ENCODE measurements at regions of chr2 and their contacts with region 1.

Region 1: DNA sequence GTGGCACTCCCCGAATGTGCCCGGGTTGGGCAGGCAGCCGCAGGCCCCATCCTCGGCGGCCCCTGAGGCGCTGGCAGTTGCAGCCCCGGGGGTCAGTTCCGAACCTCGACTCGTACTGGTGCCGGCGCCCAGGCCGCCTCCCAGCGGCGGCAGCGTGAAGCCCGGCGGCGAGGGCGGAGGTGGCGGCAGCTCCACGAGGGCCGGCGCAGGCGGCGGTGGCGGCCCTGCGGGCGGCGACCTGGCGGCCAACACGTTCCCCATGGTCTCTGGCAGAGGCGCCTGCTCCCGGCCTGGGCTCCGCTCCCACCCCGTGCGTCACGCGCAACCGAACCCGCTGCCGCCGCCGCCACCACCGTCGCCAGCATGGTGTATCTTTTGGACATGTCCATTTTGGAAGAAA is 196.3 kb downstream of the CCDC74A start:
- DNase-seq: no peak
- H3K4me3 ChIP-seq: no peak overlapping the region
- H3K27ac ChIP-seq: no peak overlapping the region
- H3K4me1 ChIP-seq: no peaks in the 10 kb centered on the region
- H3K27me3 ChIP-seq: no peaks in the 10 kb centered on the region
- CTCF ChIP-seq: no peak
- POLR2A ChIP-seq: no peak

Region 2: DNA sequence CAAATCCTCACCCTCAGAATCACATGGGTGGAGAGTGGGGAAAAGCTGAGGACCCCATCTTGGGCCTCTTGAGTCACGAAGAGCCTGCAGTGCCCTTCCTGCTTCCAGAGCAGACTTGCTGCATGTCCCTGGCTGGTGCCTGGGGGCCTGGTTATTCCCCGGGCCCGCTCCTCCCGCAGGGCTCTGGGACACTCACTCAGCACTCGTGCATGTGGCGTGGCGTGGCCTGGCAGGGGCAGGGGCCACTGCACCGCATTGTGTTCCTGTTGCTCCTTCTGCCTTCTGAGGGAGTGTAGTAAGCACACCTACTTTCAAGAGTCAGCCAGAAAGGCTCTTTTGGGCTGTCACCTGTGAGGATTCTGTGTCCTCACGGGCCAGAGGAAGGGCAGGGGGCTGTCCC is 214.4 kb before region 1 on chr2:
- CTCF ChIA-PET with region 1: no interaction called
- POLR2A ChIA-PET with region 1: no interaction called
- dilution Hi-C with region 1: no loop called
- intact Hi-C with region 1: no loop called
- DNase-seq: no peak
- H3K4me3 ChIP-seq: no peak overlapping the region
- H3K27ac ChIP-seq: no peak overlapping the region
- H3K4me1 ChIP-seq: no peaks in the 10 kb centered on the region
- H3K27me3 ChIP-seq: no peaks in the 10 kb centered on the region
- CTCF ChIP-seq: no peak
- POLR2A ChIP-seq: no peak

Region 3: GRCh38 chr2:131552871-131553270 is 171.1 kb before region 1 on chr2:
- CTCF ChIA-PET with region 1: no interaction called
- POLR2A ChIA-PET with region 1: no interaction called
- dilution Hi-C with region 1: no loop called
- intact Hi-C with region 1: no loop called
- DNase-seq: no peak
- H3K4me3 ChIP-seq: no peak overlapping the region
- H3K27ac ChIP-seq: no peak overlapping the region
- H3K4me1 ChIP-seq: no peaks in the 10 kb centered on the region
- H3K27me3 ChIP-seq: peaks cover 0 to 2% of the 10 kb centered on the region in 2 experiments
- CTCF ChIP-seq: no peak
- POLR2A ChIP-seq: no peak

Region 4: DNA sequence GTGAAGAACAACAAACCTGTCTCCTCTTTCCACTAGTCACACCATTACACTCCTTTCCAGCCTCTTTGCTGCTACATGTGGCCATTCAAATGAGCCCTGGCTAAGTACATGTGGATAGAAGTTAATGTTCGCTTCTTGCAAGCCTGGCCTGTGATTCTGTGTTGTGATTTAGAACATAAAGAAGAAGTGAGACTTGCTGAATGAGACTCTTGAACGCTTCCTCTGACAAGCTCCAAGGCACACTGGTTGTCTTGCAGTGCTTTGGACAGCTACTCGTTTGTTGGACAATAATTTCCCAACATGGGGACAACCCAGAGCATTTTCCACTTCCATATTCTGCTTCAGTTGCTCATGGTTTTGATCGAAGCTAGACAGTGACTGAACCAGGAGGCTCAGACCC is 139.1 kb before region 1 on chr2:
- CTCF ChIA-PET with region 1: no interaction called
- POLR2A ChIA-PET with region 1: no interaction called
- dilution Hi-C with region 1: no loop called
- intact Hi-C with region 1: no loop called
- DNase-seq: no peak
- H3K4me3 ChIP-seq: no peak overlapping the region
- H3K27ac ChIP-seq: no peak overlapping the region
- H3K4me1 ChIP-seq: no peaks in the 10 kb centered on the region
- H3K27me3 ChIP-seq: peaks cover 7% of the 10 kb centered on the region in 2 experiments
- CTCF ChIP-seq: no peak
- POLR2A ChIP-seq: no peak

Region 5: GRCh38 chr2:132923787-132924186 is 1199.8 kb after region 1 on chr2:
- CTCF ChIA-PET with region 1: no interaction called
- POLR2A ChIA-PET with region 1: no interaction called
- dilution Hi-C with region 1: no loop called
- intact Hi-C with region 1: loop called (anchors 10 kb)
- DNase-seq: no peak
- H3K4me3 ChIP-seq: no peak overlapping the region
- H3K27ac ChIP-seq: no peak overlapping the region
- H3K4me1 ChIP-seq: no peaks in the 10 kb centered on the region
- H3K27me3 ChIP-seq: no peaks in the 10 kb centered on the region
- CTCF ChIP-seq: no peak
- POLR2A ChIP-seq: no peak

Measured in endothelial cell of umbilical vein (primary cell).